ENCODE measurements at regions of chr18 and their contacts with region 1.

Region 1: DNA sequence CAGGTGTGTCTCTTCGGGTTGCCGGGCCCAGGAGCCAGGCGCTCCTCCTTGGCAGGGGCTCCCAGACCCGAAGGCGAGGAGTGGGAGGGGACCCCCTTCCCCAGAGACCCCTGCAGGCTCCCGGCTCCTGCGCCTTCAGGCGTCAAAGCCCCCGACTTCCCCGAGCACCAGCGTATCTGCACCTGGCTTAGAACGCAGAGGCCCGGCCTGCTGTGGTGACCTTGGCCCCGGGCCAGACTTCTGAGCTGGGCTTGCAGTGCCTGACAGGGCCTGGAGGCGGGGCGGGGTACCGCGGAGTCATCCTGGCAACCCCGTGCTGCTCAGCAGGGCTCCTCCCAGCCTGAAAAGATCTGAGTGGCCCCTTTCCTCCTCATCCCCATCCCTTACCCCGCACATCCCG is 27.0 kb downstream of the SKA1 start:
- DNase-seq: peak; percentile 40 to 45
- H3K4me3 ChIP-seq: no peak overlapping the region
- H3K27ac ChIP-seq: no peak overlapping the region
- H3K4me1 ChIP-seq: no peaks in the 10 kb centered on the region
- H3K27me3 ChIP-seq: peaks cover 15% of the 10 kb centered on the region
- CTCF ChIP-seq: no peak

Region 2: DNA sequence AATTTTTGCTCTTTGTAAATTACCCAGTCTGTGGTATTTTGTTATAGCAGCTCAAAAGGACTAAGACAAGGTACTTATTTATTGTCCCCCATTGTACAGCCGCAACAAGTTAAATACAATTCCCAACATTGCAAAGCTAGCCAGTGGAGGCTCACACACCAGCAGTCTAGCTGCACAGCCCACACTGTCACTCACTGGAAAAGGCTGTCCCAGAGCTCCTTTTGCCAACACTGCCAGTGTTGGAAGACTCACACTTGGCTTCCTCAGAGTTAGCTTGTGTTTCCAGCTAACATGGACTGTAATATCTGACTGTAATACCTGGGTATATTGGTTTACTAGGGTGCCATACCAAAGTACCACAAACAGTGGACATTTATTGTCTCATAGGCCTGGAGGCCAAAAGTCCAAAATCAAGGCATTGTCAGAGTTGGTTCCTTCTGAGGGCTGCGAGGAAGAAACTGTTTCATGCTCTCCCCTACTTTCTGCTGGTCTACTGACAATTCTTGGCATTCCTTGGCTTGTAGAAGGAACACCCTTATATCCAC is 934.8 kb before region 1 on chr18:
- CTCF ChIA-PET with region 1: no interaction called
- POLR2A ChIA-PET with region 1: interaction called, 33 read pairs
- intact Hi-C with region 1: no loop called
- DNase-seq: no peak
- H3K4me3 ChIP-seq: no peak overlapping the region
- H3K27ac ChIP-seq: no peak overlapping the region
- H3K4me1 ChIP-seq: no peaks in the 10 kb centered on the region
- H3K27me3 ChIP-seq: no peaks in the 10 kb centered on the region
- CTCF ChIP-seq: no peak

Region 3: GRCh38 chr18:50203801-50204604 is 197.9 kb before region 1 on chr18:
- CTCF ChIA-PET with region 1: no interaction called
- POLR2A ChIA-PET with region 1: no interaction called
- intact Hi-C with region 1: no loop called
- DNase-seq: peak in 1 of 2 experiments; percentile 37
- H3K4me3 ChIP-seq: peak overlapping the region; percentile 19; the same call in 1 of the 2 replicates
- H3K27ac ChIP-seq: no peak overlapping the region
- H3K4me1 ChIP-seq: no peaks in the 10 kb centered on the region
- H3K27me3 ChIP-seq: no peaks in the 10 kb centered on the region
- CTCF ChIP-seq: peak; percentile 75

Region 4: DNA sequence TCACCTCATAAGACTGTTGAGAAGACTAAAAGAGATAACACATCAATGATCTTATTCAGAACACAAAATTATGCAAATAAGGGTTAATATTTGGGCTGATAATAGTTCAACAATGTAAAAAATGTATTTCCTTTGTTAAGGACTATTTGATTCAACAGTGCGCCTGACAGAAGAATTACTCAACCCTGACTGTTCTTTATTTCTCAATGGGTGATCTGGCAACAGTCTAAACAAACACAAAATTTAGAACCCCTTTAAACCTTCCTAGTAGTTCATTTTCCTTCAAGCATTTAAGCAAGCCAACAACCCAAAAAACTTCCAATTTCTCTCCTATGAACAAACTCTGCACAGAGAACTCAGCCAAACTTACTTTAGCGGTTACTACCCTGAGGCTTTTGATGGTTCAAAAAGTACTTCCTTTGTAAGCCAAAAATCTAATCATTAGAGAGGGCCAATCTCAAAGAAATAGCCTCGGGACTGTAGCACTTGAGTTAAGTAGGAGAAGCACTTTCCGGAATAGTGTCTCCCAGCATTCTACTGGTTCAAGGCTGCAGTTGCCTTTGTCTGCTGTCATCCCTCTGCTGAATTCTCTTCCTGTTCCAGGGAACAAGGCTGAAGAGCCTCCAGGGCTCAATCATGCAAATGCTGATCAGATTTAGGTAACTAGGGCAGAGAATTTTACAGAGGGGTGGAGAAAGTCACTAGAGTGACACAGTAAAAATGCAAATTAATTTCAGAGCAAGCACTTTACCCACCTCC is 117.1 kb after region 1 on chr18:
- CTCF ChIA-PET with region 1: no interaction called
- POLR2A ChIA-PET with region 1: no interaction called
- intact Hi-C with region 1: no loop called
- DNase-seq: no peak
- H3K4me3 ChIP-seq: no peak overlapping the region
- H3K27ac ChIP-seq: no peak overlapping the region
- H3K4me1 ChIP-seq: no peaks in the 10 kb centered on the region
- H3K27me3 ChIP-seq: no peaks in the 10 kb centered on the region
- CTCF ChIP-seq: no peak

Region 5: DNA sequence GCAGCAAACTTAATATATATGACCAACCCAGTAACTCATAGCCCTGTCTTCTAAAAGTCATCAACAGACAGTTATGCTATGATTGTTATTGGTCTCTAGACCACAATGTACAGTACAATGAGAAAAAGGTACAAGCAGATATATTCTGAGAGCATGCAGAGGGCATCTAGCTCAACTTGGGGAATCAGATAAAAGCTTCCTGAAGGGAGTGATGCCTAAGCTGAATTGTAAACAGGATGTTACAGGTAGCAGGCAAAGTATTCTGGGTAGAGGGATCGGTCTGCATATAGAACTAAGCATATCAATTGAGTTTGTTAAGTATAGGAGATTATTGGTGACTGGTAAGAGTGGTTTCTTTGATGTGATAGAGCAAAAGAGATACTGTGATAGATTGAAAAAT is 507.4 kb after region 1 on chr18:
- CTCF ChIA-PET with region 1: no interaction called
- POLR2A ChIA-PET with region 1: no interaction called
- intact Hi-C with region 1: no loop called
- DNase-seq: no peak
- H3K4me3 ChIP-seq: no peak overlapping the region
- H3K27ac ChIP-seq: no peak overlapping the region
- H3K4me1 ChIP-seq: no peaks in the 10 kb centered on the region
- H3K27me3 ChIP-seq: no peaks in the 10 kb centered on the region
- CTCF ChIP-seq: no peak